T-cell (primary cell): ENCODE measurements at regions of chr12 and their contacts with region 1.

Region 1: DNA sequence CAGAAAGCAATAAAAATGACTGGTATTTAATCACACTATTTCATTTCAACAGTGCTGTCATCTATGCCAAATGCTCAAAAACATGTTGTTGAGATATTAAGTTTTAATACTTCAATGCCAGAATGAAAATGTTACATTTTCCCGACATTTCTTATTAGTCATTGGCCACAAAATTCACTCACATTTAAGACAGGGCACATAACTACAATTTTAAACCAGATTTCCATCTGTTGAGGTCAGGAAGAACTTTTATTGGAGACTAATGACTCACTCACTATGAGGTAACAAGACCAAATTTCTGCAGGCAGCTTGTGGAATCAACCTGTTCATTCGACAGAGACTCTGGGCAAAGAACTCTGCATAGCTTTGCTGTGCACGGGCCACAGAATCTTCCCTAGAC is 36.8 kb downstream of the PPTC7 start:
- DNase-seq: no peak
- ATAC-seq: no peak
- H3K4me3 ChIP-seq: no peak overlapping the region
- H3K4me3 Mint-ChIP-seq: no peak overlapping the region
- H3K27ac ChIP-seq: no peak overlapping the region
- H3K27ac Mint-ChIP-seq: peak overlapping the region in 1 of 2 donors; percentile 44
- H3K4me1 ChIP-seq: peaks cover 0 to 4% of the 10 kb centered on the region in 2 experiments
- H3K4me1 Mint-ChIP-seq: peaks cover 33 to 50% (median 39%) of the 10 kb centered on the region in 3 donors
- H3K27me3 ChIP-seq: no peaks in the 10 kb centered on the region
- H3K27me3 Mint-ChIP-seq: no peaks in the 10 kb centered on the region

Region 2: DNA sequence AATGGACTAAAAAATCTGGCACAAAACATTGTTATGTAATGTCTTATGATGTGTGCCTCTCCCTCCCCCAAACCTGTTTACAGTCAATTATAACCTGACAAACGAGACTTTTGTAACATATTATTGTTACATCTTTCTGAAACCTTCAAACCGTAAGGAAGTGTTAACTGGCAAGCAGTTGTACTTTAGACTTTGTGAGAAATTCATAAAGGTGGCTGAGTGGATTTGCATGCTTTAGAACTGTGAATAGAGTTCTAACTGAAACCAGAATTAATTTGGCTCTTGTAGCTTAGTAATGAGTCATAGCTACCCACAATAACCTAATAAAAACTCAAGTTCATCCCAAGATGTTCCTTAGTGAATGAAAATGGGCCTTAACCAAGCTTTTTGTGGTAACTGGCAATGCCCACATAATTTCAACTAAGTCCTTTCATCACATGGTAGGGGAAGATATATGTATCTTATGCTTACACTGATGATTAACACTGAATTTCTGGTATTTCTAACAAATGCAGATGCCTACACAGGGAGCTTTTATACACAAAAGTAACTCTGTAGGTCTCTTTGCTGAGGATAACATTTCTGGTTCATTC is 14.5 kb before region 1 on chr12:
- CTCF ChIA-PET with region 1: no interaction called
- POLR2A ChIA-PET with region 1: no interaction called
- DNase-seq: no peak
- ATAC-seq: no peak
- H3K4me3 ChIP-seq: no peak overlapping the region
- H3K4me3 Mint-ChIP-seq: no peak overlapping the region
- H3K27ac ChIP-seq: no peak overlapping the region
- H3K27ac Mint-ChIP-seq: no peak overlapping the region
- H3K4me1 ChIP-seq: no peaks in the 10 kb centered on the region
- H3K4me1 Mint-ChIP-seq: peaks cover 0 to 6% (median 4%) of the 10 kb centered on the region in 3 donors
- H3K27me3 ChIP-seq: no peaks in the 10 kb centered on the region
- H3K27me3 Mint-ChIP-seq: no peaks in the 10 kb centered on the region

Region 3: GRCh38 chr12:110627500-110628195 is 81.3 kb after region 1 on chr12:
- CTCF ChIA-PET with region 1: interaction called in 1 of 2 experiments, 11 read pairs
- POLR2A ChIA-PET with region 1: no interaction called
- DNase-seq: no peak
- ATAC-seq: no peak
- H3K4me3 ChIP-seq: no peak overlapping the region
- H3K4me3 Mint-ChIP-seq: peak overlapping the region; percentile 17 to 48 (median 41)
- H3K27ac ChIP-seq: no peak overlapping the region
- H3K27ac Mint-ChIP-seq: peak overlapping the region; percentile 79 to 80
- H3K4me1 ChIP-seq: peaks cover 11 to 13% of the 10 kb centered on the region in 2 experiments
- H3K4me1 Mint-ChIP-seq: peaks cover 11 to 23% (median 13%) of the 10 kb centered on the region in 3 donors
- H3K27me3 ChIP-seq: no peaks in the 10 kb centered on the region
- H3K27me3 Mint-ChIP-seq: no peaks in the 10 kb centered on the region

Region 4: GRCh38 chr12:111011999-111012600 is 465.8 kb after region 1 on chr12:
- CTCF ChIA-PET with region 1: no interaction called
- POLR2A ChIA-PET with region 1: no interaction called
- DNase-seq: no peak
- ATAC-seq: no peak
- H3K4me3 ChIP-seq: no peak overlapping the region
- H3K4me3 Mint-ChIP-seq: no peak overlapping the region
- H3K27ac ChIP-seq: no peak overlapping the region
- H3K27ac Mint-ChIP-seq: no peak overlapping the region
- H3K4me1 ChIP-seq: no peaks in the 10 kb centered on the region
- H3K4me1 Mint-ChIP-seq: no peaks in the 10 kb centered on the region
- H3K27me3 ChIP-seq: peaks cover 3 to 22% of the 10 kb centered on the region in 2 experiments
- H3K27me3 Mint-ChIP-seq: peaks cover 42% of the 10 kb centered on the region in 2 donors